Vagina (tissue), 2 donors: ENCODE measurements at regions of chr2 and their contacts with region 1.

Region 1: GRCh38 chr2:85354286-85355072 is at the starts of genes ELMOD3 and RETSAT:
- DNase-seq: peak; percentile 99
- H3K4me3 ChIP-seq: peak within 1 kb of the TSS; percentile 58 to 76
- H3K27ac ChIP-seq: peak within 1 kb of the TSS; percentile 76
- H3K4me1 ChIP-seq: peaks cover 30% of the 10 kb centered on the region
- H3K27me3 ChIP-seq: no peaks in the 10 kb centered on the region
- CTCF ChIP-seq: no peak
- POLR2A ChIP-seq: peak in 1 of 2 donors; percentile 76
- total RNA-seq, gene ELMOD3: 44.7 TPM
- total RNA-seq, gene RETSAT: 62.1 TPM

Region 2: DNA sequence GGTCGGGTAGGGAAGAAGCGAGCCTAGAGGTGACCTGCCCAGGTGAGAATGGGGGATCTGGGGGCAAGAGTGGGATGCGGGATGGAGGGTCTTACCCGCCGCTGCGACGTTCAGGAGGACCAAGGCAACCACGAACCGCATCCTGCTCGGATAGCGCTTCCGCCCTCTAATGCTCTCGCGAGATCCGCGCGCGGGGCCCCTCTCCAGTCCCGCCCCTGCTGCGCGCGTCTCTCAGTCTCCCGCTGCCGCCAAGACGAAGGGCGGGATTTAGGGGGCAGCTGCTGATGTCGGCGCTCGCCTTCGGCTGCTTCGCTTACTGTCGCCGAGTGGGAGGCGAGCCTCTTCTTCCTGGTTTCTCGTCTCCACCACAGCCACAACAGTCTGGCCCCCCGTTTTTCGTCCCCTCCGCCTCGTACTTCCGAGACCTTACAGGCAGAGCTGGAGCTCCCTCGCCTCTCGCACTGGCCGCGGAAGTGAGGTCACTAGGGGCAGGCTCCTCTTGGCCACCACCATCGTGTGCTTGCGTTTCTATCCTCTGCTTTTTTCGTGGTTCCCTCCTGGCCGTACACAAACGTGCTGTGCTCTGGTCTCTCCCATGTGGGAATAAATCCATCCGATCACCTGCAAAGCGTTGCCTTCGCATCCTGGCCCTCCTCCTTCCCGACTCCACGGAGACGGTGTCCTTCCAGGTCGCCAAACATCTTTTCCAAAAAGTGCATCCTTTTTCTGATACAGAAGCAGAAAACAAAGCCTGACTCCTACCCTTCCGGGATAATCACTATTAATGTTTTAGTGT is 26.5 kb before region 1 on chr2 and contains the start of gene TGOLN2:
- intact Hi-C with region 1: loop called (anchors 2 kb)
- DNase-seq: peak in 1 of 2 donors; percentile 94
- H3K4me3 ChIP-seq: peak within 1 kb of the TSS; percentile 55 to 83
- H3K27ac ChIP-seq: peak within 1 kb of the TSS; percentile 96
- H3K4me1 ChIP-seq: peaks cover 44% of the 10 kb centered on the region
- H3K27me3 ChIP-seq: no peaks in the 10 kb centered on the region
- CTCF ChIP-seq: no peak
- POLR2A ChIP-seq: peak; percentile 26 to 98
- total RNA-seq, gene TGOLN2: 96.0 TPM

Region 3: DNA sequence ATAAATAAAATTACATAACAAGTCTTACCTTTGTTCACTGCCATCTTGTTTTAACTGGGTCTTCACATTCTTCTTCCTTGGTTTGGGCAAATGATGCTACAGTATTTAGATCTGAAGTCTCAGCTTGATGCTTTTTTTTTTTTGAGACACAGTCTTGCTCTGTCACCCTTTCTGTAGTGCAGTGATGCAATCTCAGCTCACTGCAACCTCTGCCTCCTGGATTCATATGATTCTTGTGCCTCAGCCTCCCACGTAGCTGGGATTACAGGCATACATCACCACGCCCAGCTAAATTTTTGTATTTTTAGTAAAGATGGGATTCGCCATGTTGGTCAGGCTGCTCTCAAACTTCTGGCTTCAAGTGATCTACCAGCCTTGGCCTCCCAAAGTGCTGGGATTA is 131.3 kb after region 1 on chr2:
- intact Hi-C with region 1: no loop called
- DNase-seq: no peak
- H3K4me3 ChIP-seq: no peak overlapping the region
- H3K27ac ChIP-seq: no peak overlapping the region
- H3K4me1 ChIP-seq: no peaks in the 10 kb centered on the region
- H3K27me3 ChIP-seq: no peaks in the 10 kb centered on the region
- CTCF ChIP-seq: no peak
- POLR2A ChIP-seq: no peak